H1 (cell line): ENCODE measurements at regions of chr7 and their contacts with region 1.

Region 1: DNA sequence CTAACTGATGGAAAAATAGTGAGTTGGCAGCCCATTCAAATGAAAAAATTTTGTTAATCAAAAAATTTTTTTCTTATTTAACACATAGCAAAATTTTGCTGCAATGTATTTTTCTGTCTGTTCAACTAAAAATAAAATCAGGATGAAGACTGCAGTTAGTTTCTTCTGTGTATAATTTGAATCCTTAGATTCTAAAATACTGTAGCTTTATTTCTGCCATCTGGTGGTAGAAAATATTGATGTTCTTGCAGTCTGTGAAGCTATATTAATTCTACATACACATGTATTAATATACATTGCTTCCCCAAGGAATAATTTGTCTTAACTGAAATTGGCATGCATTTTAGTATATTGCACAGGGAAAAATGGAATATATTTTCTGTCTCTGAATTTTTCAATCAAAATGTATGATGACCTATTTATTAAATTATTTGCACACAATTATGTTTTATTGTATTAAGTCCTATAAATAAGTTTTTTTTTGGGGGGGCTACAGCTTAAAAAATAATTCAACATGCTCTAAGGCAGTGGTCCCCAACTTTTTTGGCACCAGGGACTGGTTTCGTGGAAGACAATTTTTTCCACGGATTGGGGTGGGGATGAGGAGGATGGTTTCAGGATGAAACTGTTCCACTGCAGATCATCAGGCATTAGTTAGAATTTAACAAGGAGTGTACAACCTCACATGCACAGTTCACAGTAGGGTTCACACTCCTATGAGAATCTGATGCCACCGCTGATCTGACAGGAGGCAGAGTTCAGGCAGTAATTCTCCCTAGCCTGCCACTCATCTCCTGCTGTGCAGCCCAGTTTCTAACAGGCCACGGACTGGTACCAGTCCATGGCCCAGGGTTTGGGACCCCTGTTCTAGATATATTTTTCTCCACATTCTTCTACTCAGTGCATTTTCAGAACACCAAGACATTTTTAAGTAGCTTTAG is 119.4 kb downstream of the GNAT3 start:
- DNase-seq: no peak
- H3K4me3 ChIP-seq: no peak overlapping the region
- H3K27ac ChIP-seq: no peak overlapping the region
- H3K4me1 ChIP-seq: no peaks in the 10 kb centered on the region
- H3K27me3 ChIP-seq: no peaks in the 10 kb centered on the region
- CTCF ChIP-seq: peak in 1 of 3 experiments; percentile 2; a peak in 2 of 4 replicates
- EP300 ChIP-seq: no peak
- POLR2A ChIP-seq: no peak
- RAD21 ChIP-seq: no peak

Region 2: DNA sequence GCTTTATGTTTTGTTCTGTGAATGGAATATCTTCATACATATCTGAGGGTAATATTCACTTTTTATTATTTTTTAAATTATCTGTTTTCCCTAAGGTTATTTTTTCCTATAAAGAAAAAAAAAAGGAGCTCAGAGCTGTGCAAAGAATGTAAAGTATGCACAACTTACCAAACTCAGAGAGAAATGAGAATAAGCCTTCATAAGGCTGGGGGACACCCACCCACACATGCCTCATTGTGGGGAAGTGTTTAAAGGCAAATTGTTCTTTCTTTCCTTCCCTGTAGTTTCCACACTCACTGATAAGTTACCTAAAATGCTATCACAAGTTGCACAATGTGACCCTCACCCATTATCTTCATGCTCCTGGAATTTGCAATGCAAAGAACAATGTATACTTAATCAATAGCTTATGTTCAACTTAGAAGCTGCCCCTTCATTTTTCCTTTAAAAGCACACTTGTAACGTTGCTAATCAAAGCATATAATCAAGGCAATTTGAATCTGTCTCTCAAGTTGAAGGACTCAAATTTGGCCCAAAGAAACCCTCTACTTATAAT is 11.3 kb after region 1 on chr7:
- CTCF ChIA-PET with region 1: interaction called, 14 read pairs
- POLR2A ChIA-PET with region 1: no interaction called
- DNase-seq: no peak
- H3K4me3 ChIP-seq: no peak overlapping the region
- H3K27ac ChIP-seq: no peak overlapping the region
- H3K4me1 ChIP-seq: peaks cover 0 to 5% (median 0%) of the 10 kb centered on the region in 4 experiments; a peak in 1 of 7 replicates
- H3K27me3 ChIP-seq: peaks cover 0 to 1% (median 0%) of the 10 kb centered on the region in 4 experiments; a peak in 1 of 7 replicates
- CTCF ChIP-seq: no peak
- EP300 ChIP-seq: no peak
- POLR2A ChIP-seq: no peak
- RAD21 ChIP-seq: no peak

Region 3: DNA sequence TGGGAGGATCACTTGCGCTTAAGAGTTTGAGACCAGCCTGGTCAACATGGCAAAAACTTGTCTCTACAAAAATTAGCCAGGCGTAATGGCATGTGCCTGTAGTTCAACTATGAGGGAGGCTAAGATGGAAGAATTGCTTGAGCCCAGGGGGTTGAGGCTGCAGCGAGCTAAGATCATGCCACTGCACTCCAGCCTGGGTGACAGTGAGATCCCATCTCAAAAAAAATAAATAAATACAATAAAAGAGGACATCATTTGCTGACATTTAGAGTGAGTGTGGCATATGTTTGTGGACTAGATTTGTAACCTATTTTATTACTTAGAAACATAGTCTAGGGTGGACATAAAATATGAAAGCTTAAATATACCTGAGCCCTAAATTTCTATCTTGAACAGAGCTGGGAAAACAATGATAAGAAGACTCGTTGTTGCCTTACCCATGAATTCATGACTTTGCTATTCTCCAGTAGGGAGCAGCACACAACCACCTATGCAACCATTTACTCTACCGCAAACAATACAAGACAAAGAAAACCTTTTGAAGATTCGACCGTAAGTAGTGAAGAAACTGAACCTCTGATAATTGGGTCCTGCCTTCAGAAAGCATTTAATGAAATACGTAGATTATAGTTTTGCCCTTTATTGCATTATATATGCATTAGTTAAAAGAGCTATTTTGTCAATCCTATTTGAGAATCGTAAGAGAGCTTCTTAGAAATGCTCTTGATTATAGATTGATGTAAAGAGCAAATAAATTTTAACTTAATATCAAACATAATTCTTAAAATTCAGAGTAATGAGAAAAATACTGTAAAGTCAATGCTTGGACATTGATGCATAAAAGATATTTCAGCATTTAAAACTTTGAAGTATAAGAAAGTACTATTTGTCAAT is 35.9 kb after region 1 on chr7:
- CTCF ChIA-PET with region 1: no interaction called
- POLR2A ChIA-PET with region 1: no interaction called
- DNase-seq: no peak
- H3K4me3 ChIP-seq: no peak overlapping the region
- H3K27ac ChIP-seq: no peak overlapping the region
- H3K4me1 ChIP-seq: 0 out of 7 replicates have a peak, but pooled peaks cover 0 to 3% (median 0%) of the 10 kb centered on the region in 4 experiments
- H3K27me3 ChIP-seq: no peaks in the 10 kb centered on the region
- CTCF ChIP-seq: peak in 2 of 3 experiments; percentile 63 to 70; a peak in 3 of 4 replicates
- EP300 ChIP-seq: no peak
- POLR2A ChIP-seq: no peak
- RAD21 ChIP-seq: peak; percentile 89 to 91